Pancreas (tissue), 10 donors: ENCODE measurements at regions of chr5 and their contacts with region 1.

Region 1: DNA sequence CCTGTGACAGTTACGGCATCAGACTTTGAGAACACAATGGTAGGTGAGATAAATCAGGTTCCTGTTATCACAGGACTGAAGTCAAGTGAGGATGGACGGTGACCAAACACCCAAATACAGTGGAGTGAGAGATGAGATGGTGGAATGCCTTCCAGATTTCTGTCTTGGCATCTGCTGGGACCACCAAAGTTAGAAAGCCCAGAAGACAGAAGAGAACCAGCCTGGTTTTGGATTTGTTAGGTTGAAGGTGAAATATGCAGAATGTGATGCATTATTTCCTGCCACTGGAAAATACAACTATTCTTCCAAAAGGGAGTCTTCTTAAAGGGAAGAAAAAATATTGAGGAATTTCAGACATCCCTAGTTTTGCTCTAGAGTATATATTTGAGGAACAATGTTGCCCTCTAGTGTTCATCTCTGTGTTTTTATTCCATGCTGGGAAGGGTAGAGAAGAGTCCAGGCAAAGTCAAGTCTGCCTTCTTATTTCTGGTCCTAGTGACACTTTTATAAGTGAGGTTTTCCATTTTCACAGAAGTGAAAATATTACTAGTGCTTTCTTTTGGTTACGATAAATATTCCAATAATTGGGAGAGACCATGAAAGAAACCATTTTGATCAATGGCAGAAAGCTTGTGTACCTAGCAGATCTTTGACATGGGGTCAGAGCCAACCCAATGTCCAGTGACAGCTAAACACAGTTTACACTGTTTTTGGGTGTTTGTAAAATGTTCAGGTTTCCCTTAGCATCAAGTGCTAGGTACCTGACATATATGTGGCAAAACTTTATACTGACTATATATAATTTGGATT is 142.3 kb upstream of the ANKH start:
- DNase-seq: peak in 1 of 6 donors; percentile 18
- ATAC-seq: peak; percentile 68 to 90 (median 84)
- H3K4me3 ChIP-seq: no peak overlapping the region
- H3K27ac ChIP-seq: no peak overlapping the region
- H3K4me1 ChIP-seq: peaks cover 13 to 16% (median 16%) of the 10 kb centered on the region in 3 donors
- H3K27me3 ChIP-seq: no peaks in the 10 kb centered on the region
- CTCF ChIP-seq: peak; percentile 37 to 63 (median 56)

Region 2: GRCh38 chr5:14739538-14739937 is 274.3 kb before region 1 on chr5:
- intact Hi-C with region 1: loop called in 1 of 3 experiments (anchors 10 kb)
- DNase-seq: no peak
- ATAC-seq: peak in 1 of 4 donors; percentile 43
- H3K4me3 ChIP-seq: no peak overlapping the region
- H3K27ac ChIP-seq: no peak overlapping the region
- H3K4me1 ChIP-seq: no peaks in the 10 kb centered on the region
- H3K27me3 ChIP-seq: no peaks in the 10 kb centered on the region
- CTCF ChIP-seq: no peak

Region 3: DNA sequence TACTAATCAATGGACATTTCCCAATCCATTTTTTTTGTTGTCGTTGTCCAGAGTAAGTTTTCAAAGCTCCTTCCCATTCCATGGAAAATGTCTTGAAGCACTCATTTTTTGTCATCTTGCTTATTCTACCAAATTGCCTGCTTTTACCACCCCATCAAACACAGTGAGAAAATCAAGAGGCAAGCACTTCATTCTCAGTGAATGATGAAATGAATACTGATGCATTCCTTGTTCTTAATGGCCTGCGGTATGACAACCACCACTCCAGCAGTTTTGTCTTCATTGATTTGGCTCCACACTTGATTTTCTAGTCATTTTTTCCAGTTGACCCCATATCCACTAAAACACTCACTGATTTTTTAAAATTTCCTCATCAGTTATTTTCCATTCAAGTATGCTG is 51.2 kb after region 1 on chr5:
- intact Hi-C with region 1: no loop called
- DNase-seq: no peak
- ATAC-seq: no peak
- H3K4me3 ChIP-seq: no peak overlapping the region
- H3K27ac ChIP-seq: no peak overlapping the region
- H3K4me1 ChIP-seq: no peaks in the 10 kb centered on the region
- H3K27me3 ChIP-seq: no peaks in the 10 kb centered on the region
- CTCF ChIP-seq: no peak